ENCODE measurements at regions of chr16 and their contacts with region 1.

Region 1: DNA sequence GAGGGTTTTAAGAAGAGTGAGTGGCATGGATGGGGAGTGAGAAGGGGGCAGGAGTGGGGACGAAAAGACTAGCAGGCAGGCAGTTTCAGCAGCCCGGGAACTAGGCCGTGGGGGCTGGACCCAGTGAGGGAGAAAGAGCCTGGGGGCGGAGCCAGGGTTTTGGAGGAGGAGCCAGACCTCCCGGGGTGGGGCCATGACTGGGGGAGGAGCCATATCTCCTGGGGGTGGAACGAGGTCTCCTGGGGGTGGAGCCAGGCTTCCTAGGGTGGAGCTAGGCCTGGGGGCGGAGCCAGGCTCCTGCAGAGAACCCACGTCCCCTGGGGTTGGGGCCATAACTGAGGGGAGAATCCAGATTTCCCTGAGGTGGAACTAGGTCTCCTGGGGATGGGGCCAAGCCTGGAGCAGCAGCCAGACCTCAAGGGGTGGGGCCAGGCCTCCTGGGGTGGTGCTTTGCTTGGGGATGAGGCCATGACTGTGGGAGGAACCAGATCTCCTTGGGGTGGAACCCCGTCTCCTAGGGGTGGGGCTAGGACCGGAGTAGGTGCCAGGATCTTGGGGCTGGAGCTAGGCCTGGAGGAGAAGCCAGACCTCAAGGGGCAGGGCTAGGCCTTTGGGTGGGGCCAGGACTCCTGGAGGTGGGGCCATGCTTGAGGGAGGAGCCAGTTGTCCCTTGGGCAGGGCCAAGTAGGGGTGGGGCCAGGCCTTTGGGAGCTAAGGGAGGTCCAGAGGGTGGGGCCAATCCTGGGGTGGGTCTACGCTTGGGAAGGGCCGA is 41.7 kb upstream of the JPH3 start:
- DNase-seq: peak in 1 of 2 donors; percentile 48
- H3K4me3 ChIP-seq: no peak overlapping the region
- CTCF ChIP-seq: no peak
- POLR2A ChIP-seq: no peak

Region 2: DNA sequence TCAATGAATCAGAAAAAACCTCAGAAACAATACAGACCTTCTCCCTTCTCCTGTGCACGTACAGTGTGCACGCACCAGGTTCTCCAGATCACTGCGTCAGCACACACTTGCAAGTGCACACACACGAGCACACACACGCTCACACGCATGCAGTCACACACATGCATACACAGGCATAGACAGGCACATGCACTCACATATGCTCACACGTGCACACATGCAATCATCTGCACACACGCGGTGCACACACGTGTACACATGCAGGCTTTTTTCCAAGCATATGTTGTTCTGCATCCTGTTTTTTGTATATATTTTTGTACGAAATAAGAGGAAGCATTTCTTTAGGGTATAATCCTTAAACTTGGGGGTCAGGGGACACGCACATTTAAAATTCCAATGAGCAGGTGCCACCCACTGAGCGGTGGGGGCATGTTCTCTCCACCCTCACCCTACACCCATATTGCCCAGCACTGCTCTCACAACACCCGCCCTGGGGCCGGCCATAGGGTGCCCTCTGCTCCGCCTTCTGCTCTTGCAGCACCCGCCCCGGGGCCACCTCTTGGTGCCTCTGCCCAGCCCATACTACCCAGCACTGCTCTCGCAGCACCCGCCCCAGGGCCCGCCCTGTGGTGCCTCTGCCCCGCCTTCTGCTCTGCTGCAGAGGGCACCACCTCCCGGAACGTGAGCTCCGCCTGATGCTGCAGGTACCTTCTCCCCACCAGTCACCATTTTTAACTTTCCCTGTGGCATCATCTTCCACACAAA is 184.3 kb after region 1 on chr16:
- intact Hi-C with region 1: no loop called
- DNase-seq: no peak
- H3K4me3 ChIP-seq: no peak overlapping the region
- CTCF ChIP-seq: no peak
- POLR2A ChIP-seq: no peak

Region 3: GRCh38 chr16:88856828-88857733 is 1296.5 kb after region 1 on chr16 and contains the starts of genes GALNS and TRAPPC2L:
- intact Hi-C with region 1: loop called (anchors 5 kb)
- DNase-seq: peak; percentile 98 to 100
- H3K4me3 ChIP-seq: peak within 1 kb of the TSS; percentile 91
- CTCF ChIP-seq: no peak
- POLR2A ChIP-seq: peak in 1 of 2 donors; percentile 19
- total RNA-seq, gene GALNS: 17.3 to 45.6 (median 37.3) TPM
- total RNA-seq, gene TRAPPC2L: 29.9 to 43.0 (median 38.6) TPM

Measured in lower leg skin (tissue), 4 donors.